ENCODE measurements at regions of chr15 and their contacts with region 1.

Region 1: GRCh38 chr15:93018580-93018979 is 70.4 kb downstream of the RGMA start:
- DNase-seq: no peak
- ATAC-seq: peak in 1 of 2 donors; percentile 24

Region 2: GRCh38 chr15:91965501-91966184 is 1052.9 kb before region 1 on chr15:
- intact Hi-C with region 1: no loop called
- DNase-seq: peak; percentile 45
- ATAC-seq: peak; percentile 31 to 80

Region 3: DNA sequence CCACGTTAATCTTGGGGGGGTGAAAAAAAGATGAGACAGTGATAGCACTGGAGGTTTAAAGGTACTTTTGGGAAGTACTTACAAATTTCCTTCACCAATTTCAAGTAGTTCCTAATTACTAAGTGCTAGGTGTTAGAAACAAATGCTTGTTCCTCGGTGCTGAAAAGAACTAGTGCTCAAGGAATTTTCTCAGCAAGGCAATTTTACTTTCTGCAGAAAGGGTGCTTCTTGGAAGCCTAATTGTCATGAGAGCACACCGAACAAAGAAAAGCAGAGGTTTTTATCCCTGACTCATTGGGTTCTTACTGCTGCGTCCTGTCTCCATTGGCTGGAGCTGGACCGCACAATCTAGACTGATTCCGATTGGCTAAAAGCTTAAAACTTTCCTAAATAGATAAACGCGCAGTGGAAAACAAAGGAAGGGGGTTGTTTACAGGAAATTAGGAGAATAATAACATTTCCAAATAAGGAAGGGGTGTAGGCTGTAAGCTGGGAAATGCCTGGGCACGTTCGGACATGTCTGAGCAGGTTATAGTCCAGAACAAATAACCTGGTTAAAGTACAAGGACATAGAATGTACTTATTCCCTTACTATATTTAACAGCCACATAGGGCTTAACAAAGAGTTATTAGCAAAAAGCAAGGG is 68.9 kb before region 1 on chr15:
- intact Hi-C with region 1: loop called in 1 of 2 experiments (anchors 10 kb)
- DNase-seq: no peak
- ATAC-seq: no peak